IMR-90 (cell line): ENCODE measurements at regions of chr5 and their contacts with region 1.

Region 1: GRCh38 chr5:55456216-55456895 is 78.4 kb downstream of the PLPP1 start:
- DNase-seq: peak; percentile 79
- ATAC-seq: peak; percentile 72
- H3K4me3 ChIP-seq: no peak overlapping the region
- H3K27ac ChIP-seq: no peak overlapping the region
- H3K4me1 ChIP-seq: peaks cover 3% of the 10 kb centered on the region; the same call in 1 of the 2 replicates
- H3K27me3 ChIP-seq: no peaks in the 10 kb centered on the region
- CTCF ChIP-seq: no peak
- POLR2A ChIP-seq: no peak
- RAD21 ChIP-seq: no peak

Region 2: DNA sequence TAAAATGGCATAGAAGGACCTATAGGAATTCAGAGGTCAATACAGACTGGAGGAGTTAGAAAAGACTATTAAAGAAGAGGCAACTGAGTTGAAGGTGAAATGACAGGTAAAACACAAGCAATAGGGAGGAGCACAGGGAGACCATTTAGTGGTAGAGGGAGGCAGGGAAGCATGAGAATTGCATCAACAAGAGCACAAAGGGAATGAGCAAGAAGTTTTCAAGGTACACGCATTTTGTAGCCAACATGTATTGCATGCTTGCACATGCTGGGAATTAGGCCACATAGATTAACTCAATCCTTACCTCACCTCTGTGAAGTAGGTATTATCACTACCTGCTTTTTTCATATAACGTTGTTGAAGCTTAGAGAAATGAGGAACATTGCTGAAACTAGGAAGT is 36.1 kb after region 1 on chr5:
- CTCF ChIA-PET with region 1: no interaction called
- POLR2A ChIA-PET with region 1: no interaction called
- dilution Hi-C with region 1: no loop called
- in situ Hi-C with region 1: no loop called
- intact Hi-C with region 1: loop called (anchors 5 kb)
- DNase-seq: no peak
- ATAC-seq: no peak
- H3K4me3 ChIP-seq: no peak overlapping the region
- H3K27ac ChIP-seq: no peak overlapping the region
- H3K4me1 ChIP-seq: no peaks in the 10 kb centered on the region
- H3K27me3 ChIP-seq: no peaks in the 10 kb centered on the region
- CTCF ChIP-seq: no peak
- POLR2A ChIP-seq: no peak
- RAD21 ChIP-seq: no peak